Activated B cell treated with CpG ODN at 0.5 μM for 24 hours (primary cell): ENCODE measurements at regions of chr11 and their contacts with region 1.

Region 1: DNA sequence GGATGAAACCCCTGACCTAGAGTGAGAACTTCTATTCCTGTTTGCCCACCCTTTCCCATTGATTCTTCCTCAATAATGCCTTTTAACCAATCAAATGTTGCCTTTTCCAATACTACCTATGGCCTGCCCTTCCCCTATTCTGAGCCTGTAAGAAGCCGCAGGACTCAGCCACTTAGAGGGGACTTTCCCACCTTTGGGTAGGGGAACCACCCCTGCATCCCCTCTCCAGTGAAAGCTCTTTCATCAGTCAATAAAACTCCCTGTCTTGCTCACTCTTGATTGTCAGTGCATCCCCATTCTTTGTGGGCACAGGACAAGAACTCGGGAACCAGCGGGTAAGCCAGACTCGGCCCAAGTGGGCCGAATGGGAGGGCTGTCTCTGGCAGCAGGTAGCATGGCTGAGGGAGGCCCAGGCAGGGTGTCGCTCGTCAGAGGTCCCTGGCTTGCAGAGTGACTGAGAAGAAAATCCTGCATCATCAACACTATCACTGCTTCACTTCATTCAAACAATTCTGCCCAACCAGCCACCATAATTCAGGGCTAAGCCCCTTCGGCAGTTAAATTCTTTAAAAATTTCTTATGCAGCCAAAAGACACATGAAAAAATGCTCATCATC is 30.4 kb downstream of the LDHAL6A start:
- DNase-seq: peak; percentile 20
- ATAC-seq: peak; percentile 98
- H3K4me3 Mint-ChIP-seq: peak overlapping the region; percentile 30
- H3K27ac Mint-ChIP-seq: peak overlapping the region; percentile 90
- H3K4me1 Mint-ChIP-seq: peaks cover 8% of the 10 kb centered on the region
- H3K27me3 Mint-ChIP-seq: no peaks in the 10 kb centered on the region
- CTCF ChIP-seq: no peak

Region 2: GRCh38 chr11:18243783-18244362 is 242.1 kb before region 1 on chr11:
- CTCF ChIA-PET with region 1: interaction called, 6 read pairs
- POLR2A ChIA-PET with region 1: no interaction called
- intact Hi-C with region 1: loop called (anchors 5 kb)
- DNase-seq: no peak
- ATAC-seq: no peak
- H3K4me3 Mint-ChIP-seq: no peak overlapping the region
- H3K27ac Mint-ChIP-seq: no peak overlapping the region
- H3K4me1 Mint-ChIP-seq: peaks cover 15% of the 10 kb centered on the region
- H3K27me3 Mint-ChIP-seq: peaks cover 16% of the 10 kb centered on the region
- CTCF ChIP-seq: no peak

Region 3: DNA sequence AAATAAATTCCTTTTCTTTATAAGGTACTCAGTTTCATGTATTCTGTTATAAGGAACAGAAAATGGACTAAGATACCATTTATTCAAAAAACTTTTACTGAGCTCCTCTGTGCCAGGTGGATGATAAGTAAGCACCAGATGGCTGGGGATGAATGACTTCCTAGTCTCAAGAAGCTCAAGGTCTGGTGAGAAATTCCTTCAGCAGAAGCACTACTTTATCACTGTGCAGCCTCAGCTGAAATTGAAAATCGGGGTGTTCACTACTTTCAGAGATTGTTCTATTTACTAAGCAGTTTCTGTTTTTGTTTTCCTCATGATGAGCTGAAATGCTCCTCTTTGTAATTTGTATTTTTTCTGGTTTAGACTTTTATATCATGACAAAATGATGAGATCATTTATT is 22.6 kb before region 1 on chr11:
- CTCF ChIA-PET with region 1: no interaction called
- POLR2A ChIA-PET with region 1: no interaction called
- intact Hi-C with region 1: no loop called
- DNase-seq: no peak
- ATAC-seq: no peak
- H3K4me3 Mint-ChIP-seq: no peak overlapping the region
- H3K27ac Mint-ChIP-seq: no peak overlapping the region
- H3K4me1 Mint-ChIP-seq: no peaks in the 10 kb centered on the region
- H3K27me3 Mint-ChIP-seq: no peaks in the 10 kb centered on the region
- CTCF ChIP-seq: no peak